AG04450 (cell line): ENCODE measurements at regions of chr11 and their contacts with region 1.

Region 1: GRCh38 chr11:62665075-62665598 is at the starts of genes C11orf98 and CSKMT:
- DNase-seq: peak; percentile 88
- H3K4me3 ChIP-seq: peak within 1 kb of the TSS; percentile 96
- H3K27ac ChIP-seq: peak within 1 kb of the TSS; percentile 90
- H3K27me3 ChIP-seq: no peaks in the 10 kb centered on the region
- CTCF ChIP-seq: no peak
- polyA plus RNA-seq, gene C11orf98: 38.8 and 43.6 TPM in 2 replicates
- polyA plus RNA-seq, gene CSKMT: 4.6 and 4.7 TPM in 2 replicates

Region 2: GRCh38 chr11:62491231-62491948 is 173.7 kb before region 1 on chr11:
- CTCF ChIA-PET with region 1: no interaction called
- POLR2A ChIA-PET with region 1: no interaction called
- DNase-seq: no peak
- H3K4me3 ChIP-seq: no peak overlapping the region
- H3K27ac ChIP-seq: no peak overlapping the region
- H3K27me3 ChIP-seq: no peaks in the 10 kb centered on the region
- CTCF ChIP-seq: no peak

Region 3: DNA sequence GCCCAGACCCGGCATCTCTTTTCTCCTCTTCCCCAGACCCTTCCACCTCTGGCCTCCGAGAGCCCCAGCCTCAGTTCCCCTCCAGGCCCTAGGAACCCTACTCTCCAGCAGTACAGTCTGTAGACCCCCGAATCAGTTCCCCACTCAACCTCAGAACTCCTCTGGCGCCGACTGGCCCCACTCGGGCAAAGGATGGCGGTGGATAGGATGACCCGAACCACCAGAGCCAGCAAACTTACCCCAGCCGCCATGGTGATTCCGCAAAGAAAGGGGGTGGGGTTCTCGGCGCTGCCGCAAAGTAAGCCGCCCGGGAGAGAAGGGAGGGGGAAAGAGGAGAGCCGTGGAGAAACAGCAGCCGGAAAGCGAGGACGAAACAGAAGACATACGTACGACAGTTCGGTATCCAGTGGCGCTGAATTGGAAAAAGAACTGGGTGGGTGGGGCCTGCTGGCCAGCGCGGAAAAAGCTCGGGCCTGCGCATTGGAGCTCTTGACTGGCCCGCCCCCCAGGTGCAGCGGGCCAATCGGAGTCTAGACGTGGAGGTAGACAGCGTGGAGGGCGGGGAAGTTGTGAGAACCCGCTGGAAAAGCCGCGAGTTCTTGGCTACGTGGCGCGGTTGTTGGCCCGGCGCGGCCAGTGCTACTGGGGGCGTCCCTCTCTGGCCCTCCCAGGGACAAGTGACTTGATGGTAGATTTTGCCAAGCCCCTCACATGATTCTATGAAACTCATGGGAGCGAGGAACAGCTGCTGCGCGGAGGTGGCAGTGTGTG is 91.4 kb before region 1 on chr11 and contains the start of gene EEF1G:
- CTCF ChIA-PET with region 1: no interaction called
- POLR2A ChIA-PET with region 1: interaction called, 36 read pairs
- DNase-seq: peak; percentile 100
- H3K4me3 ChIP-seq: peak within 1 kb of the TSS; percentile 92
- H3K27ac ChIP-seq: peak within 1 kb of the TSS; percentile 98
- H3K27me3 ChIP-seq: no peaks in the 10 kb centered on the region
- CTCF ChIP-seq: no peak
- polyA plus RNA-seq, gene EEF1G: 2,186 and 2,474 TPM in 2 replicates

Region 4: GRCh38 chr11:62621567-62622470 is 43.3 kb before region 1 on chr11 and contains the start of gene B3GAT3:
- CTCF ChIA-PET with region 1: no interaction called
- POLR2A ChIA-PET with region 1: interaction called, 23 read pairs
- DNase-seq: peak; percentile 96
- H3K4me3 ChIP-seq: peak within 1 kb of the TSS; percentile 86
- H3K27ac ChIP-seq: peak within 1 kb of the TSS; percentile 97
- H3K27me3 ChIP-seq: no peaks in the 10 kb centered on the region
- CTCF ChIP-seq: peak; percentile 13; the same call in 1 of the 2 replicates
- polyA plus RNA-seq, gene B3GAT3: 14.5 and 20.2 TPM in 2 replicates

Region 5: GRCh38 chr11:62678770-62679696 is 13.9 kb after region 1 on chr11 and contains the start of gene UBXN1:
- CTCF ChIA-PET with region 1: interaction called, 11 read pairs
- POLR2A ChIA-PET with region 1: interaction called, 70 read pairs
- DNase-seq: peak; percentile 66
- H3K4me3 ChIP-seq: peak within 1 kb of the TSS; percentile 98
- H3K27ac ChIP-seq: peak within 1 kb of the TSS; percentile 80
- H3K27me3 ChIP-seq: no peaks in the 10 kb centered on the region
- CTCF ChIP-seq: no peak
- polyA plus RNA-seq, gene UBXN1: 92.8 and 100 TPM in 2 replicates

Region 6: DNA sequence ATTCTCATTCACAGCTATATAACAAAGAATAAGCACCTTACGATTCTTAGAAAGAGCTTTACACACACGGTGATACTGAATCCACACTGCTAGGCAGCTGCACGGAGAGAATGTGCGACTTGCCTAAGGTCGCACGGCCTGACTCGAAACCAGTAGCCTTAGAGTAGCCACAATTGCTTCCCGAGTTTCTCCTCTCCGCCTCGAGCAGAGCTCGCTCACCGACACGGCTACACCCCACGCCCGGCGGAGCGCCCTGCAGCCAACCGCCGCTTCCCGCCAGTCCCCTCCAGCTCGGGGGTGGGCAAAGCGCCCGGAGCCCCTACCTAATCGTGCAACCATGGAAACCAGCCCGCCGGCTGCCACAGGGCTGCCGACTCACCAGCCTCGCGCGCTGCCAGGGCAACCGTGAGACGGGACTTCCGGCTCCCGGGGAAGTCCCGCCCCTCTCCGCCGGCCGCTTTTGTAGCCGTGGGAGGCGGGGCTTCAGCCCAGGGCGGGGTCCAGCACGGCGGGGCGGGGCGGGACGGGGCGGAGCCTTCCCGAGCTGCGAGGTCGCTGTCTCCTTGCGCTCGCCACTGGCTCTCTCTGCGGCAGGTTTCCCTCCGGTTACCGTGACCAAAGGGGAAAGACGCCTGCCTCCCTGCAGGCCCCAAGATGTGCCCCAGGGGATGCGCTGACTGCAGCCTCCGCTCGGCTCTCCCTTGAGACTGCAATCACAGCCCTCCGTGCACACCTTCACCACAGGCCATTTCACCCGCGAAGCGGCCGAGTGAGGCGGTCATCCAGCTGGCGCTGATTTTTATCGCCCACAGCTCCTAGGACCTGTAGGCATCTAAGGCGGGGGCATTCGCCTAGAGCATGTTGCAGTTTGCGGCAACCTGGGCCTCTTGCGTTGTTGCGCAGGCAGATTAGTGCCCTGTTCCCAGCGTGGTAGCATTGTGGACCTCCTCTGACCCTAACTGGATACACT is 41.0 kb after region 1 on chr11:
- CTCF ChIA-PET with region 1: interaction called, 11 read pairs
- POLR2A ChIA-PET with region 1: interaction called, 26 read pairs
- DNase-seq: peak; percentile 79
- H3K4me3 ChIP-seq: peak overlapping the region; percentile 76
- H3K27ac ChIP-seq: peak overlapping the region; percentile 86
- H3K27me3 ChIP-seq: no peaks in the 10 kb centered on the region
- CTCF ChIP-seq: no peak

Region 7: DNA sequence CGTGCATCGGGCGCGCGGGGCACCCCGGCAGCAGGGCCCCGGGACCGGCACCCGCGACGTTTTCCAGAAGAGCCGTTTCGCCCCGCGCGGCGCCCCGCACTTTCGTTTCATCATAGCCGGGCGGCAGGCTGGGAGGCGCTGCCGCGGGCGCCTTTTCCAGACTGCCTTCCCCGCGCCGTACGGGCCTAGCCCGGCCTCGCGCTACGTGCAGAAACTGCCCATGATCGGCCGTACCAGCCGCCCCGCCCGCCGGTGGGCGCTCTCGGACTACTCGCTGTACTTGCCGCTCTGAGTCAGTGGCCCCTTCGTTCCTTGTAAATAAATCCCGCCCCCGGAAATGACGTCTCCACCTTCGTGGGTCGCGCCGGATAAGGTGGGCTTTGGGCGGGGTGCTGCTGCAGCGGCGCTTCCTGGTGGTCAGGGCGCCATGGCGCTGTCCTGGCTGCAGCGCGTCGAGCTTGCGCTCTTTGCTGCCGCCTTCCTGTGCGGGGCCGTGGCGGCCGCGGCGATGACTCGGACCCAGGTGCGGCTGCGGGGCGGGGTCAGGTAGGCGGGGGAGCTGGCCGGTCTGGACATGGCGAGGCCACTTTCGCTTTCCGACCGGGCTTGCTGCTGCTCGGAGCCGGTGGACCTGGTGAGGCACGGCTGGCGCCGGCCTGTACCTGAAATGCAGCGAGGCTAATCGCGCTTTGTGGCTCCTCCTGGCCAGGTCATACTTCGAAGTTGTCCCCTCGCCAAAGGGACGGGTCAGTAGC is 122.0 kb after region 1 on chr11 and contains the start of gene TMEM179B:
- CTCF ChIA-PET with region 1: no interaction called
- POLR2A ChIA-PET with region 1: interaction called, 16 read pairs
- DNase-seq: peak; percentile 93
- H3K4me3 ChIP-seq: peak within 1 kb of the TSS; percentile 89
- H3K27ac ChIP-seq: peak within 1 kb of the TSS; percentile 73
- H3K27me3 ChIP-seq: no peaks in the 10 kb centered on the region
- CTCF ChIP-seq: peak; percentile 70
- polyA plus RNA-seq, gene TMEM179B: 51.7 and 63.8 TPM in 2 replicates

Region 8: GRCh38 chr11:62804310-62805075 is 139.4 kb after region 1 on chr11:
- CTCF ChIA-PET with region 1: no interaction called
- POLR2A ChIA-PET with region 1: no interaction called
- DNase-seq: no peak
- H3K4me3 ChIP-seq: peak overlapping the region; percentile 96
- H3K27ac ChIP-seq: peak overlapping the region; percentile 81
- H3K27me3 ChIP-seq: no peaks in the 10 kb centered on the region
- CTCF ChIP-seq: no peak